ENCODE measurements at regions of chr3 and their contacts with region 1.

Region 1: DNA sequence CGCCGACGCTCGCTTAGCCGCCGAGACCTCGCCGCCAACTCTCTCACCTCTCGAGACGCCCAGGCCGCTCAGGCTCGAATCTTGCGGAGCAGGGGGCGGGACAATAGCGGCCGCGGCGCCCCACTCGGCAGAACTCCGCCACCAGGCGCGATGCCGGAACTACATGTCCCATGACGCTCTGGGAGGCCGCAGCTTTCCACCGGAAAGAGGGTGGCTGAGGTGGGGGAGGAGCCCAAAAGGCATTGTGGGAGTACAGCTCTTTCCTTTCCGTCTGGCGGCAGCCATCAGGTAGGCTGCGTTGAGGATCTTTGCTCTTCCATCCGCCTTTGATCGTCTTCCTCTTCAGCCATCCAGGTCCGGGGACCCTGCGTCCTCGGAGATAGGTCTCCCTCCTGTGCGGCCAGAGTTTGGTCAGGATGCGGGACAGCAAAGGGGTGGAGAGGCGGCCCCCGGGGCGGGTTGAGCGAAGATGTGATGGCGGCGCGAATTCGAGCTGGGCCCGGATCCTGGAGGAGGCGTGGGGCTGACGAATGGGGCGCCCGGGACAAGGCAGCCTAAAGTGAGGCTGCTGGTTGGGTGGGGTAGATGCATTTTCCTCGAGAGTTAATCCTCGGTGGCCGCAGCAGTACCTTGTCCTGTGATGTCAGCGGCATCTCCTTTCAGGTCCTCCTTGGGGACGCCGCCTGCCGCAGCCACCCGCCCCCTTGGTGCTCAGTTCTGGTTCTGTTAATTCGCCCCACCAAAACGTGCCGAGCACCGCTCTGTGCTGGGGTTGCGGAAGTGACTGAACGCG is at the starts of genes NKIRAS1 and RPL15:
- DNase-seq: peak; percentile 97
- ATAC-seq: peak; percentile 92
- H3K4me3 ChIP-seq: peak within 1 kb of the TSS; percentile 83 to 99 (median 99)
- H3K4me3 Mint-ChIP-seq: peak within 1 kb of the TSS; percentile 99
- H3K27ac ChIP-seq: peak within 1 kb of the TSS; percentile 85 to 94
- H3K27ac Mint-ChIP-seq: peak within 1 kb of the TSS; percentile 99
- H3K4me1 ChIP-seq: peaks cover 33 to 35% of the 10 kb centered on the region in 2 donors
- H3K4me1 Mint-ChIP-seq: peaks cover 51% of the 10 kb centered on the region
- H3K27me3 ChIP-seq: no peaks in the 10 kb centered on the region
- H3K27me3 Mint-ChIP-seq: peaks cover 4% of the 10 kb centered on the region
- CTCF ChIP-seq: peak; percentile 36
- total RNA-seq, gene NKIRAS1: 3.5 and 4.7 TPM in 2 replicates
- total RNA-seq, gene RPL15: 2,162 and 2,177 TPM in 2 replicates

Region 2: DNA sequence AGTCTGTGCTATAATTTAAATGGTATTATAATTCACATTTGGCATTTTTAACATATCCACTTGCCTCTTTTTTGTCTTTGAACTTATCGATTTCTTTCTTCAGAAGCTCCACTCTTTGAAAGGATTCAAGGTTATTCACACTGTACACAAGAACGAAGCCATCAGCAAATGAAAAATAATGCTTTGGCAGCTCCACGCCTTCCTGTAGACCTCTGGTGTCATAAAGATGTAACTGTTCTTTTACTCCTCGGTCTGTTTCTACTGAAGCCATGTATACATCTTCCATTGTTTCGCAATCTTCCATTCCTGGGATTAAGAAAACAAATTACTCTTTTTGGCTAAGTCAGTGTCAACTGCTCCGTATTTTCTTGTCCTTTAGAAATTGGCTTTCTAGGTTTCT is 16.3 kb before region 1 on chr3:
- CTCF ChIA-PET with region 1: no interaction called
- POLR2A ChIA-PET with region 1: no interaction called
- intact Hi-C with region 1: no loop called
- DNase-seq: no peak
- ATAC-seq: no peak
- H3K4me3 ChIP-seq: no peak overlapping the region
- H3K4me3 Mint-ChIP-seq: no peak overlapping the region
- H3K27ac ChIP-seq: no peak overlapping the region
- H3K27ac Mint-ChIP-seq: no peak overlapping the region
- H3K4me1 ChIP-seq: no peaks in the 10 kb centered on the region
- H3K4me1 Mint-ChIP-seq: no peaks in the 10 kb centered on the region
- H3K27me3 ChIP-seq: no peaks in the 10 kb centered on the region
- H3K27me3 Mint-ChIP-seq: no peaks in the 10 kb centered on the region
- CTCF ChIP-seq: no peak

Region 3: DNA sequence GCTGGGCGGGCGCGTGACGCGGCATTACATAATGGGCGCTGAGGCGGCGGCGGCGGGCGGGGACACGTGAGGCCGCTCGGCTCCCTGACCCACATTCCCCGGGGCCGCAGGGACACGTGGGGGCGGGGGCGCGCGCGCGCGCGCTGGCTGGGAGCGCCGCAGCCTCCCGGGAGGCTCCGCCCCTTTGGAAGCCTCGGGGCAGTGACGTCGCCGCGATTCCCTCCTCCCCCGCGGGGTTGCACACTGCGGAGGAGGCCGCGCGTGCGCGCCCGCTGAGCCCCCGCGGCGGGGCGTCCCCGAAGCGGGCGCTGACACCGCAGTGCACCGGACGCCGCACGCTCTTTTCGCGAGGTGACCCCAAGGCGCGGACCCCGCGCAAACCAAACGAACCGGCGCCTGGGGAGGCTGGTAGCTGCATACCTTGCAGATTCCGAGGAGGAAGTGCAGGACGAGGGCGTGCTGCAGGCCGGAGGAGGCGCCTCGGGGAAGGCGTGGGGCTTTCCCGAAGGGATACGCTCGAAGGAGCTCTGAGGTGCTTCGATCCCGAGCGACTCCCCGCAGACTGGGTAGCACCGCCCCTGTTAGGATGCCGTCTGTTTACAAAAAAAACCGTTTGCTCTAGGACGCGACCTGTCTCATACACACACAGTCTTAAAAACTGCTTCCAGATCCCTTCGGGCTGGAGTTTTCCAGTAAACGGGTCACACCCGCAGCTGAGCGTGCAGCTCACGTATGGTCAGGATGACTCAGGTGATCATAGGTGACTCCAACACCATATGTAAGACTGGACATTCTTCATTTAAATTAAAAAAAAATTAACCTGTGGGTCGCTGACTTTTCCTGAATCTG is 29.0 kb after region 1 on chr3:
- CTCF ChIA-PET with region 1: interaction called, 6 read pairs
- POLR2A ChIA-PET with region 1: interaction called, 35 read pairs
- intact Hi-C with region 1: loop called (anchors 1 kb)
- DNase-seq: peak; percentile 99
- ATAC-seq: peak; percentile 77
- H3K4me3 ChIP-seq: peak overlapping the region; percentile 49 to 88 (median 84)
- H3K4me3 Mint-ChIP-seq: peak overlapping the region; percentile 93
- H3K27ac ChIP-seq: peak overlapping the region; percentile 83
- H3K27ac Mint-ChIP-seq: peak overlapping the region; percentile 92
- H3K4me1 ChIP-seq: peaks cover 30 to 33% of the 10 kb centered on the region in 2 donors
- H3K4me1 Mint-ChIP-seq: peaks cover 48% of the 10 kb centered on the region
- H3K27me3 ChIP-seq: no peaks in the 10 kb centered on the region
- H3K27me3 Mint-ChIP-seq: no peaks in the 10 kb centered on the region
- CTCF ChIP-seq: no peak

Region 4: DNA sequence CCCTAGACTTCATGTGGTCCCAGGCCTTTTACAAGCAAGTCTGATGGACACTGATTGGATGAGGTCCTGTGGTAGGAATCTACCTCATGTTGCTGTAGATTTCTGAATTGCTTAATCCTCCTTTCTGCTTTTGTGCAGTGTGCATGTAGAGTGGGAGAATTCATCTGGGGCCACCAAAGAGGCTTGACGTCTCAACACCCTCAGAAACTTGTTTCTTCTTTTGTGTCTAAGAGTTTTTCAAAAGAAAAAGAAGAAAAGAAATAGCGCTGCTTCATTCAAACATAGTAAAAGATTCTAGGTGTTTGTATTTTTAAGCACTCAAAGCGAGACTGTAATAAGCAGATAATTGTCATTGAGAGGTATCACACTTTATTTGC is 74.2 kb after region 1 on chr3:
- CTCF ChIA-PET with region 1: no interaction called
- POLR2A ChIA-PET with region 1: no interaction called
- intact Hi-C with region 1: no loop called
- DNase-seq: no peak
- ATAC-seq: no peak
- H3K4me3 ChIP-seq: no peak overlapping the region
- H3K4me3 Mint-ChIP-seq: no peak overlapping the region
- H3K27ac ChIP-seq: no peak overlapping the region
- H3K27ac Mint-ChIP-seq: no peak overlapping the region
- H3K4me1 ChIP-seq: peaks cover 10 to 15% of the 10 kb centered on the region in 2 donors
- H3K4me1 Mint-ChIP-seq: peaks cover 16% of the 10 kb centered on the region
- H3K27me3 ChIP-seq: no peaks in the 10 kb centered on the region
- H3K27me3 Mint-ChIP-seq: no peaks in the 10 kb centered on the region
- CTCF ChIP-seq: no peak

Region 5: DNA sequence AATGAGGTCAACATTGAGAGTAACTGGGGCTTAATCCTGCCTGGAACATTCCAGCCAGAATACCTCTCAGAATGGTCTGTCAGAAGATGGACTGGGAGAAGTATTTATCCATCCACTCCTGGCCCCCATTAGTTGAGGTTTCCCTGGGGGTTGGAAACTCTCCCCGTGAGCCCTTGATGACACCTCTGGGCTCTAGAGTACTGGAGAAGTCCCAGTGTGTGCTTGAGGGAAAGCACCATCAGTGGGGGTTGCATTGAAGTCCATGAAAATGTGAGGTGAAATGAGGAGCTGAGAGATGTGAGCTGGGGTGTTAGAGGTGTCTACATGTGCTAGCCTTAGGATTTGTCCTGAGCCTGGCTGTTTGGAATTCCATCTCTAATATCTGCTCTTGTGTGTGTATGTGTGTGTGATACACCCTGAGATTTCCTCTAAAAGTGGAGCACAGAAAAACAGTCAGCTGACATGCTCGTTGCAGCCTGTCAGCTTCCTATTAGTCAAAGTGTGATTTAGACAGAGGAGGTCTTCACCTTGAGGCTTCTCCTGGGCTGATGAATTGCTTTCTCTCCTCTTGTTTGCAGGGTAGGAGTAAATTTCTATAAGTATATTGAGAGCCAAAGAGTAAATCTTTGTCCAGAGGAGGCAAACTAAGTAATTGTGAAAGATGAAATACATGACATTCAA is 95.6 kb after region 1 on chr3:
- CTCF ChIA-PET with region 1: no interaction called
- POLR2A ChIA-PET with region 1: no interaction called
- intact Hi-C with region 1: no loop called
- DNase-seq: no peak
- ATAC-seq: no peak
- H3K4me3 ChIP-seq: no peak overlapping the region
- H3K4me3 Mint-ChIP-seq: no peak overlapping the region
- H3K27ac ChIP-seq: no peak overlapping the region
- H3K27ac Mint-ChIP-seq: no peak overlapping the region
- H3K4me1 ChIP-seq: no peaks in the 10 kb centered on the region
- H3K4me1 Mint-ChIP-seq: no peaks in the 10 kb centered on the region
- H3K27me3 ChIP-seq: no peaks in the 10 kb centered on the region
- H3K27me3 Mint-ChIP-seq: peaks cover 8% of the 10 kb centered on the region
- CTCF ChIP-seq: no peak

Region 6: GRCh38 chr3:24299806-24300626 is 382.9 kb after region 1 on chr3:
- CTCF ChIA-PET with region 1: no interaction called
- POLR2A ChIA-PET with region 1: no interaction called
- intact Hi-C with region 1: no loop called
- DNase-seq: no peak
- ATAC-seq: no peak
- H3K4me3 ChIP-seq: no peak overlapping the region
- H3K4me3 Mint-ChIP-seq: no peak overlapping the region
- H3K27ac ChIP-seq: no peak overlapping the region
- H3K27ac Mint-ChIP-seq: no peak overlapping the region
- H3K4me1 ChIP-seq: no peaks in the 10 kb centered on the region
- H3K4me1 Mint-ChIP-seq: no peaks in the 10 kb centered on the region
- H3K27me3 ChIP-seq: no peaks in the 10 kb centered on the region
- H3K27me3 Mint-ChIP-seq: no peaks in the 10 kb centered on the region
- CTCF ChIP-seq: no peak

Measured in B cell (primary cell).